ENCODE measurements at regions of chr6 and their contacts with region 1.

Region 1: DNA sequence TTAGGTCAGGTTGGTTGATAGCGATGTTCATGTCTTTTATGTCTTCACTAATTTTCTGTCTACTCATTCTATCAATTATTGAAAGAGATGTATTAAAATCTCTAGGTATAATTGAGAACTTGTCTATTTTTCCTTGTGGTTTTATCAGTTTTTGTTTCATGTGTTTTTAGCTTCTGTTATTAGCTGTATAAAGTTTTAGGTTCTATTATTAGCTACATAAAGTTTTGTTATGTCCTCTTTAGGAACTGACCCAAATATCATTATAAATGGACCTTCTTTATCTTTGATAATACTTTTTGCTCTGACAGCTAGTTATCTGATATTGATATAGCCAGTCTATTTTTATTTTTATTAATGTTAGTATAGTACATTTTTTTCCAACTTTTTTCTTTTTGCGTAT is 92.4 kb upstream of the TMEM170B start:
- DNase-seq: no peak
- ATAC-seq: no peak
- H3K4me3 ChIP-seq: peak overlapping the region in 1 of 5 experiments; percentile 4
- H3K4me3 Mint-ChIP-seq: peak overlapping the region; percentile 27
- H3K27ac ChIP-seq: peak overlapping the region in 1 of 2 donors; percentile 62
- H3K27ac Mint-ChIP-seq: peak overlapping the region; percentile 11
- H3K4me1 ChIP-seq: peaks cover 32 to 45% of the 10 kb centered on the region in 2 donors
- H3K4me1 Mint-ChIP-seq: peaks cover 60% of the 10 kb centered on the region
- H3K27me3 ChIP-seq: no peaks in the 10 kb centered on the region
- H3K27me3 Mint-ChIP-seq: no peaks in the 10 kb centered on the region
- CTCF ChIP-seq: no peak

Region 2: GRCh38 chr6:10831609-10832008 is 613.5 kb before region 1 on chr6:
- CTCF ChIA-PET with region 1: no interaction called
- POLR2A ChIA-PET with region 1: no interaction called
- intact Hi-C with region 1: no loop called
- DNase-seq: no peak
- ATAC-seq: no peak
- H3K4me3 ChIP-seq: no peak overlapping the region
- H3K4me3 Mint-ChIP-seq: no peak overlapping the region
- H3K27ac ChIP-seq: no peak overlapping the region
- H3K27ac Mint-ChIP-seq: no peak overlapping the region
- H3K4me1 ChIP-seq: peaks cover 0 to 4% of the 10 kb centered on the region in 2 donors
- H3K4me1 Mint-ChIP-seq: no peaks in the 10 kb centered on the region
- H3K27me3 ChIP-seq: peaks cover 0 to 18% (median 15%) of the 10 kb centered on the region in 4 experiments
- H3K27me3 Mint-ChIP-seq: peaks cover 18% of the 10 kb centered on the region
- CTCF ChIP-seq: no peak

Region 3: DNA sequence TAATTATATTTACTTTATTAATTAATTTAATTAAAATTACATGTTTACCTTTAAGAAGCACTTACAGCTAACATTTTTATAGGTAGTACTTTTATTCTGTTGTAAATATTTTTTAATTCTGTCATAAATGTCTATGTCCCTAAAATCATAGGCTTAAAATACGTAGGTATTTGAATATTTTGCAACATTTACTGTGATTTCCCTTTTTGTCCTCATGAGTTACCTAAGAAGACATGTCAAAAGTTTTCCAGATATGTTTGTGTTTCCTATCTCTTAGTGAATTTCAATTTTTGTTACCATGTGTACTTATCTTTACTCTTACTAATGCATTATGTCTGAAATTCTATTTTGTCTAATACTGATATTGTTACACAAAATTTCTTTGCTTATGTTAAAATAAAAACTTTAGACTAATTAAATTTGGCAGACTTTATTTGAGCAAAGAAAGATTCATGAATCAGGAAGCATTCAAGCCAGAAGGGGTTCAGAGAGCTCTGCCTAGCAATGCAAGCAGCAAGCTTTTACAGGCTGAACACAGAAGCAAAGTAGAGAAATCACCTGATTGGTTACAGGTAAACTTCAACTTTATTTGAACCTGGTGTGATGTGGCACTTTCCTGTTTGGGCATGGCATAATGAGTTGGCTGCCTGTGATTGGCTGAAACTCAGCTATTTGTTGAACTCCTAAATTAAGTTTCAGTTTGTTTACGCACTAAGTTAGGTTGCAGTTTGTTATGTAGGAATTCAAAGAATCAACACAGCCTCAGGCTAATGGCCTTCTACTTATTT is 30.8 kb before region 1 on chr6:
- CTCF ChIA-PET with region 1: no interaction called
- POLR2A ChIA-PET with region 1: interaction called, 4 read pairs
- intact Hi-C with region 1: loop called (anchors 5 kb)
- DNase-seq: peak; percentile 46
- ATAC-seq: peak; percentile 64
- H3K4me3 ChIP-seq: peak overlapping the region in 1 of 5 experiments; percentile 3
- H3K4me3 Mint-ChIP-seq: peak overlapping the region; percentile 39
- H3K27ac ChIP-seq: no peak overlapping the region
- H3K27ac Mint-ChIP-seq: peak overlapping the region; percentile 37
- H3K4me1 ChIP-seq: peaks cover 19 to 30% of the 10 kb centered on the region in 2 donors
- H3K4me1 Mint-ChIP-seq: peaks cover 33% of the 10 kb centered on the region
- H3K27me3 ChIP-seq: no peaks in the 10 kb centered on the region
- H3K27me3 Mint-ChIP-seq: no peaks in the 10 kb centered on the region
- CTCF ChIP-seq: no peak

Region 4: DNA sequence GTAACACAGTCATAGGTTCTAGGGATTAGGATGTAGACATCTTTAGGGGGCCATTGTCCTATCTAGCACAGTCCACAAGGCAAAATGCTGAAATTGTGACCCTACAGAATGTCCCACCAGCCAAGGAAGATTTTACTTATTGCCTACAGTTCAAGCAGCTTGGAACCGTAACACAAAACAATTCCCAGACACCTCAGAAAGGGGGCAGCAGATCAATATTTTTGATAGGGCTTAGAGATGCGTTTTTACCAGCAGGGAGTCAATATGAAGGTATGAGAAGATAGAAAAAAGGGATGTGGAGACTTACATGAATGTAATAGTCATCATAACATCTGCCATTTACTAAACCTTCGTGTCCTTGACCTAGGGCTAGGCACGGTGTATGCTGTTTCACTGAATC is 173.4 kb after region 1 on chr6:
- CTCF ChIA-PET with region 1: no interaction called
- POLR2A ChIA-PET with region 1: no interaction called
- intact Hi-C with region 1: no loop called
- DNase-seq: no peak
- ATAC-seq: no peak
- H3K4me3 ChIP-seq: no peak overlapping the region
- H3K4me3 Mint-ChIP-seq: no peak overlapping the region
- H3K27ac ChIP-seq: no peak overlapping the region
- H3K27ac Mint-ChIP-seq: no peak overlapping the region
- H3K4me1 ChIP-seq: no peaks in the 10 kb centered on the region
- H3K4me1 Mint-ChIP-seq: no peaks in the 10 kb centered on the region
- H3K27me3 ChIP-seq: no peaks in the 10 kb centered on the region
- H3K27me3 Mint-ChIP-seq: peaks cover 4% of the 10 kb centered on the region
- CTCF ChIP-seq: no peak